A549 (cell line): ENCODE measurements at regions of chr19 and their contacts with region 1.

Region 1: DNA sequence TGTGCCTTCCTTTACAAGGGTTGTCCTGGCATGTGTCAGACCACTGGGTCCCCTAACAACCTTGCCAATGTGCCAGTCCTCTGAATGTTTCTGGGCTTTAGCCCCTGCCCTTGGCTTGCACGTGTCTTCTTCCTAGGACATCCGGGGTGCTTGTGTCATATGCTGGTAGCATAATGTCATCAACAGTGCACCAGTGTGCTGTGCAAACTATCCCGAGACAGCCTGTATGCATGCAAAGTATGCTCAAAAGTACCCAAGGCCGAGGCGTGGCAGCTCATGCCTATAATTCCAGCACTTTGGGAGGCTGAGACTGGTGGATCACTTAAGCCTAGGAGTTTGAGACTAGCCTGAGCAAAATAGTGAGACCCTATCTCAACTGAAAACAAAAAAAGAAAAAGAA is 20.7 kb upstream of the C19orf12 start:
- DNase-seq: peak in 1 of 2 experiments; percentile 31
- ATAC-seq: peak in 1 of 2 experiments; percentile 12; a peak in 2 of 6 replicates
- H3K4me3 ChIP-seq: no peak overlapping the region
- H3K27ac ChIP-seq: no peak overlapping the region
- H3K4me1 ChIP-seq: 0 out of 3 replicates have a peak, but pooled peaks cover 3% of the 10 kb centered on the region
- CTCF ChIP-seq: no peak
- EP300 ChIP-seq: no peak
- POLR2A ChIP-seq: no peak
- RAD21 ChIP-seq: no peak

Region 2: GRCh38 chr19:29680447-29680846 is 55.4 kb before region 1 on chr19:
- CTCF ChIA-PET with region 1: interaction called, 13 read pairs
- POLR2A ChIA-PET with region 1: no interaction called
- DNase-seq: no peak
- ATAC-seq: peak in 1 of 2 experiments; percentile 3; a peak in 3 of 6 replicates
- H3K4me3 ChIP-seq: no peak overlapping the region
- H3K27ac ChIP-seq: no peak overlapping the region
- H3K4me1 ChIP-seq: no peaks in the 10 kb centered on the region
- CTCF ChIP-seq: no peak
- EP300 ChIP-seq: no peak
- POLR2A ChIP-seq: no peak
- RAD21 ChIP-seq: no peak

Region 3: DNA sequence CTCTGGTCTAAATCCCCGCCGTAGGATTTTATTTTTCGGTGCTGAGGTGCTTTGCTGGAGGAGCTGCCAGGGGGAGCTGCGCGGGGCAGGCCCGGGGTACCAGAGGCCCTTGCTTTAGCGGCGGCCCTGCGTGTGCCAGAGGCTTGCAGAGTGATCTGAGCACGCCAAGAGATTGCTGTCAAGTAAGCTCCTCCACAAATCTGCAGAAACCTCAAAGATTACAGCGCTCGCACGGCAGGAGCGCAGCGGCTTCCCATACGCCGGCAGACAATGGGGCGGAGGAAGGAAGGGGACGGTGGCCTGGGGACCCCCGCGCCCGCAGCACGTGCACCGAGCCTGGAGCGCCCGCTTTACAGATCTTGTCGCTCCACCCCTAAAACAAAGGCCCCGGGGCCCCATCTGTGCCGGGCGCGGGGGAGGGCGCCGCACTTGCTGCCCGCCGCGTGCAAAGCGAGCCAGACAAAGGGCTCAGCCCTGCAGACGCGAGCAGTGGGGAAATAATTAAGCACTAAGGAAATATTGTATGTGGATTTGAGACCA is 11.6 kb before region 1 on chr19:
- CTCF ChIA-PET with region 1: interaction called, 103 read pairs
- POLR2A ChIA-PET with region 1: interaction called, 5 read pairs
- DNase-seq: no peak
- ATAC-seq: no peak
- H3K4me3 ChIP-seq: no peak overlapping the region
- H3K27ac ChIP-seq: no peak overlapping the region
- H3K4me1 ChIP-seq: no peaks in the 10 kb centered on the region
- CTCF ChIP-seq: no peak
- EP300 ChIP-seq: no peak
- POLR2A ChIP-seq: no peak
- RAD21 ChIP-seq: no peak

Region 4: GRCh38 chr19:29753190-29753933 is 17.6 kb after region 1 on chr19:
- CTCF ChIA-PET with region 1: interaction called, 99 read pairs
- POLR2A ChIA-PET with region 1: no interaction called
- DNase-seq: no peak
- ATAC-seq: peak; percentile 2 to 42; a peak in 3 of 6 replicates
- H3K4me3 ChIP-seq: no peak overlapping the region
- H3K27ac ChIP-seq: no peak overlapping the region
- H3K4me1 ChIP-seq: no peaks in the 10 kb centered on the region
- CTCF ChIP-seq: no peak
- EP300 ChIP-seq: no peak
- POLR2A ChIP-seq: no peak
- RAD21 ChIP-seq: no peak

Region 5: GRCh38 chr19:29851769-29852521 is 116.1 kb after region 1 on chr19:
- CTCF ChIA-PET with region 1: interaction called, 13 read pairs
- POLR2A ChIA-PET with region 1: interaction called, 4 read pairs
- DNase-seq: no peak
- ATAC-seq: no peak
- H3K4me3 ChIP-seq: no peak overlapping the region
- H3K27ac ChIP-seq: no peak overlapping the region
- H3K4me1 ChIP-seq: no peaks in the 10 kb centered on the region
- CTCF ChIP-seq: no peak
- EP300 ChIP-seq: no peak
- POLR2A ChIP-seq: no peak
- RAD21 ChIP-seq: no peak

Region 6: DNA sequence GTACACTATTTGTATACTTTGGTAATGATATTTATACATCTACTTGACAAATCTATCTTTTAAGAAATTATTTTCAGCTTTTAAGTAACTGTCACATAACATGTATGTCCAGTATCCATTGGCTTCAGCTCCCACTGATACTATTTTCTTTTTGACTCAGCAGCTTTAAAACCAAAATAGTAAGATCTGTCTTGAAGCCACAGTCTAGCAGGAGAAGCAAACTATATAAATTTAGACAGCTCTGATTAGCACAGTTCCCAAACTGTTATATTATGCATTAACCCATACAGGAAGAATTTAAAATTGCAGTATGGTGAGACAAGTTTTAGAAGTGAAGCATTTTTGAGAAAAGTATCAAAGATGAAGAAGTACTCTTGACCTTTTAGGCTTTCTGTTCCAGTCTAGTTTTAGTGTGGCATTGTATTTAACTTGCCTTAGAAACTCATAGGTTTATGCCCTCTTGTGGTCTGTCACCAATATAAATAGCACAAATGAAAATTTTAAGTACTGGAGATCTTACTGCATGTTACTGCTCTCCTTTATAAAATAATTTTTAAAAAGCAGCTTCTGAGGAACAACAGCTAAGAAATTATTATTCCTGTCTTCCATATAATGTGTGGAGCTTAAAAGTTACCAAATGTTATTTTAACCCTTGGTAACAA is 230.9 kb after region 1 on chr19:
- CTCF ChIA-PET with region 1: interaction called, 19 read pairs
- POLR2A ChIA-PET with region 1: no interaction called
- DNase-seq: peak in 1 of 2 experiments; percentile 57
- ATAC-seq: peak; percentile 75 to 84; a peak in 5 of 6 replicates
- H3K4me3 ChIP-seq: no peak overlapping the region
- H3K27ac ChIP-seq: no peak overlapping the region
- H3K4me1 ChIP-seq: peaks cover 47% of the 10 kb centered on the region
- CTCF ChIP-seq: peak; percentile 66
- EP300 ChIP-seq: no peak
- POLR2A ChIP-seq: no peak
- RAD21 ChIP-seq: peak; percentile 38 to 45; a peak in 4 of 5 replicates

Region 7: GRCh38 chr19:30649934-30650614 is 914.3 kb after region 1 on chr19:
- CTCF ChIA-PET with region 1: interaction called, 20 read pairs
- POLR2A ChIA-PET with region 1: no interaction called
- DNase-seq: peak; percentile 72 to 87
- ATAC-seq: peak; percentile 50 to 85; a peak in 5 of 6 replicates
- H3K4me3 ChIP-seq: no peak overlapping the region
- H3K27ac ChIP-seq: no peak overlapping the region
- H3K4me1 ChIP-seq: no peaks in the 10 kb centered on the region
- CTCF ChIP-seq: peak; percentile 99
- EP300 ChIP-seq: no peak
- POLR2A ChIP-seq: no peak
- RAD21 ChIP-seq: peak; percentile 94 to 98